ENCODE measurements at regions of chr9 and their contacts with region 1.

Region 1: DNA sequence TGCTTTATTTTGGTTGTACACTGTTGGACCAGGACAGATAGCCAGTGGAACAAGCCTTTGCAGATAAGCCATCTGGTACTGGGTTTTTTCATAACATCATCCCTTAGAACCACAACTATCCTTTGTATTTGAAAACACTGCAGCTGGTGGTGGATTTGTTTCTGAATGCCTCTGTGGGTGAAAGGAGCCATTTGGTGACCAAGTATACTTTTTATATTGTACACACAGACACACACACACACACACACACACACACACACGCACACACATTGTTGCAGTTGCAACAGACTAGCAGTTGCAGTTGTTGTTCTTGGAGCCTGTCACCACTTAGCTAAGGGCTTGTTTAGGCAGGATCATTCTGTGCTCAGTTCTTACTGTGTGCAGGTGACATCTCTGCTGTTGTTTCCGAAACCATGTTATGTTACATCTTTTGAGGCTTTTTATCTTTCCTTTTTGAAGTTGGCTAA is 22.9 kb upstream of the CAVIN4 start:
- DNase-seq: no peak
- ATAC-seq: peak in 2 of 4 donors; percentile 40 to 65
- H3K4me3 ChIP-seq: no peak overlapping the region
- H3K27ac ChIP-seq: no peak overlapping the region
- H3K4me1 ChIP-seq: no peaks in the 10 kb centered on the region
- H3K27me3 ChIP-seq: no peaks in the 10 kb centered on the region
- CTCF ChIP-seq: no peak

Region 2: DNA sequence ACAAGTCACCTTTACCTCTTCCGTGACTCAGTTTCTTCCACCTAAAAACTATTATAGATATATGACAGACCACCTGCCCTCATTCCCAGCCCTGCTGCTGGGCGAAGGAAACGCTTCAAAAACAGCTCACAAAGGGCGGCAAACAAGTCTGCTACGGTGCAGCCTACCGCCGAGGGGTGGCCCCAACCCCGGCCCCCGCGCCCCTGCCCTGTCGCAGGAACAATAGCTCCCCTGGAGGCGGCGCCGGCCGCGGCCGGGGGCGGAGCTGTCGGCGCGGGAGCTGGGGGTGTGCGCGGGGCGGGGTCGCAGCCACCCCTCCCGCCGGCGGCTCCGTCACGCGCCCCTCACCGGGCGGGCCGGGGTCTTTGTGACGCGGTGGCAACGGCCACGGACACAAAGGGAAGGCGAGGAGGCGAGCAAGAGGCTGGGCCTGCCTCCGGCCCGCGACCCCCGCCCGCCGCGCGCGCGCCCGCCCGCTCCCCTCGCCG is 82.1 kb before region 1 on chr9 and contains the start of gene TMEFF1:
- intact Hi-C with region 1: no loop called
- DNase-seq: peak; percentile 42 to 67
- ATAC-seq: peak; percentile 55 to 82 (median 78)
- H3K4me3 ChIP-seq: peak within 1 kb of the TSS; percentile 83
- H3K27ac ChIP-seq: no peak within 1 kb of the TSS
- H3K4me1 ChIP-seq: peaks cover 19% of the 10 kb centered on the region
- H3K27me3 ChIP-seq: peaks cover 0 to 4% (median 0%) of the 10 kb centered on the region in 3 donors
- CTCF ChIP-seq: no peak
- total RNA-seq, gene TMEFF1: 0.29 to 0.56 (median 0.30) TPM in 3 of 4 donors, not detected in the other

Region 3: DNA sequence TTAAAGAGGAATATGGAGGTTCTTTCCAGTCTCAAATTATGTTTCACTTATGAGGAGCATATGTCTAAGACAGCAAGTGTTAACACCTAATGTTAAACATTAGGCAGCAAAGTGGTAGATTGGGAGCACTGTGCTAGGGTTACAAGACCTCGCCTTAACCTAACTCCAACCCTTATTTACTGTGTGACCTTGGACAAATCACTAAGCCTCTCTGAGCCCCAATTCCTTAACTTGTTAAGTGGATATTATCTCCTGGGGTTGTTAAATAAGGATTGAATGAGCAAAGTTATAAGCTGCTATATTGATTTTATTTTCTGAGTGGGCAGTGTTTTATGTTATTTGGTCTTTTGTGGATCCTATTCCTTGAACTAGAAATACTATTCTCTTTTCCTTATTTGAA is 43.8 kb before region 1 on chr9:
- intact Hi-C with region 1: loop called in 1 of 2 experiments (anchors 5 kb)
- DNase-seq: no peak
- ATAC-seq: no peak
- H3K4me3 ChIP-seq: no peak overlapping the region
- H3K27ac ChIP-seq: no peak overlapping the region
- H3K4me1 ChIP-seq: no peaks in the 10 kb centered on the region
- H3K27me3 ChIP-seq: no peaks in the 10 kb centered on the region
- CTCF ChIP-seq: no peak

Region 4: DNA sequence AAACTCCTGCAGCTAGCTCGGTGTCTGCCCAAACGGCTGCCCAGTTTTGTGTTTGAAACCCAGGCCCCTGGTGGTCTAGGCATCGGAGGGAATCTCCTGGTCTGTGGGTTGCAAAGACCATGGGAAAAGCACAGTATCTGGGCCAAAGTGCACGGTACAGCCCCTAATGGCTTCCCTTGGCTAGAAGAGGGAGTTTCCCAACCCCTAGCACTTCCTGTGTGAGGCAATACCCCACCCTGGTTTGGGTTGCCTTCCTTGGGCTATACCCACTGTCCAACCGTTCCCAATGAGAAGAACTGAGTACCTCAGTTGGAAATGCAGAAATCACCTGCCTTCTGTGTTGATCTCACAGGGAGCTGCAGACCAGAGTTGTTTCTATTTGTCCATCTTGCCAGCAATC is 64.7 kb after region 1 on chr9:
- intact Hi-C with region 1: no loop called
- DNase-seq: no peak
- ATAC-seq: no peak
- H3K4me3 ChIP-seq: no peak overlapping the region
- H3K27ac ChIP-seq: no peak overlapping the region
- H3K4me1 ChIP-seq: no peaks in the 10 kb centered on the region
- H3K27me3 ChIP-seq: no peaks in the 10 kb centered on the region
- CTCF ChIP-seq: no peak

Measured in psoas muscle (tissue), 8 donors.